Activated CD8-positive, alpha-beta T cell treated with anti-CD3 and anti-CD28 coated beads for 36 hours (primary cell): ENCODE measurements at regions of chr9 and their contacts with region 1.

Region 1: DNA sequence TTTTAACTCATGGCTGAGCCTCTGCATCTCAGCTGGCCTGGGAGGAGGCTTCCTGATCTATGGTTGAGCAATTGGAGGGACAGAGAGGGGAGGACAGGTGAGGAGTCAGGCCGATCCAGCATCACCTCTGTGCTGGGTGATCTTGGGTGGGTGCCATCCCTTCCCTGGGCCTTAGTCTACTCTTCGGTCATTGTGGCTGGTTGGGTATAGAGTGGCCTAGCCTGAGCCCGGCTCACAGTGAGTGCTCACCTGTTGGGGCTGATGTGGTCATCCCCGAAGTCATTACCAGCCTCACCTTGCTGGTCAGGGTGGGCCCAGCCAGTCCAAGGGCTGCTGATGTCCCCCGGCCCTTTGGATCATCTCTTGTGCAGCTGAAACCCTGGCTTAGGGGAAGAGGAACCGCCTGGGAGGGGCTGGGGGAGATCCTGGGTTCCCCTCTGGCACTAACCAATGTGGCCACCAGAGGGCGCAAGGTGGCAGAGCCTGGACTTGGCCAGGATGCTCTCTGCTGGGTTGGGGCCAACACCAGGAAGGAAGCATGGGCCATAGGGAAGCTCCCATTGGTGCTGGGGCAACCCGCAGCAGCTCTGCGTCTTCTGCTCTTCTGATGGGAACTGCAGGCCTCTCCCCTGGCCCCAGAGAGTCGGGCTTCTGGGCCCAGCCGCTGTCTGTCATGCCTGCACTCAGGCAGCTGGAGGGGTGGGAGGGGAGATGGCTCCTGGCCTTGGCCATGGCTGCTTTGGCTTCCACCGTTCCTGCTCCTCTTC is 17.3 kb upstream of the ODF2 start:
- DNase-seq: peak; percentile 89
- ATAC-seq: peak; percentile 99
- H3K4me3 Mint-ChIP-seq: no peak overlapping the region
- H3K27ac Mint-ChIP-seq: no peak overlapping the region
- H3K4me1 Mint-ChIP-seq: no peaks in the 10 kb centered on the region
- H3K27me3 Mint-ChIP-seq: no peaks in the 10 kb centered on the region
- CTCF ChIP-seq: peak; percentile 97

Region 2: DNA sequence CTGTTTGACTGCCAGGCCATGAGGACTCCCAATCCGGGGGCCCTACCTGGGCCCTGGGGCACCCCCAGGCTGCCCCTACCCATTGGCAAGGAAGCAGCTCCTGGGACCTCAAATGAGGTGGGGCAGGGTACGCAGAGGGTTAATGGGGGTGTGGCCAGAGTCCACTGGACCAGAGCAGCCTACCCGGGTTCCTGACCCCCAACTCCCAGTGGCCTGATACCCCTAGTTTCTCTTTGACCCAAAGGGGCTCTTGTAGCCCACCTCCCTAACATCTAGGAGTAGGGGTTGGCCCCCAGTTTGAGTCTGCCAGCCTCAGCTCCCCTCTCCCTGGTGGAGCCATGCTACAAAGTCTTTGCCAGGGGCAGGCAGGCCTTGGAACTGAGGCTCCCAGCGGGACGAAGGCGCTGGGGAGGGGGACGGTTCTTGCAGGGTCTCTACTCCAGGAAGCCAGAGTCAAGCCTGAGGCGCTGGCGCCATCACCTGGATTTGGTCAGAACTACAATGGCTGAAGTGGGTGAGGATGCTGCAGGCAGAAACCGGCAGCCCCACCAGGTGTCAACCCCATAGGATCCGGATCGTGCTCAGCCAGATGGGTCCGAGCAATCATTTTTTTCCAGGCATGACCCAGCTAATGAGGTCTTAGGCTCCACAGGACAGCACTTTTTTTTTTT is 26.3 kb before region 1 on chr9:
- CTCF ChIA-PET with region 1: interaction called, 13 read pairs
- POLR2A ChIA-PET with region 1: interaction called, 3 read pairs
- intact Hi-C with region 1: no loop called
- DNase-seq: peak; percentile 79
- ATAC-seq: peak; percentile 83
- H3K4me3 Mint-ChIP-seq: no peak overlapping the region
- H3K27ac Mint-ChIP-seq: no peak overlapping the region
- H3K4me1 Mint-ChIP-seq: no peaks in the 10 kb centered on the region
- H3K27me3 Mint-ChIP-seq: peaks cover 42% of the 10 kb centered on the region
- CTCF ChIP-seq: peak; percentile 62

Region 3: GRCh38 chr9:128420060-128420650 is 18.4 kb before region 1 on chr9:
- CTCF ChIA-PET with region 1: interaction called, 17 read pairs
- POLR2A ChIA-PET with region 1: no interaction called
- intact Hi-C with region 1: no loop called
- DNase-seq: peak; percentile 78
- ATAC-seq: peak; percentile 83
- H3K4me3 Mint-ChIP-seq: peak overlapping the region; percentile 73
- H3K27ac Mint-ChIP-seq: no peak overlapping the region
- H3K4me1 Mint-ChIP-seq: peaks cover 6% of the 10 kb centered on the region
- H3K27me3 Mint-ChIP-seq: peaks cover 22% of the 10 kb centered on the region
- CTCF ChIP-seq: peak; percentile 85

Region 4: GRCh38 chr9:128448746-128449145 is 10.2 kb after region 1 on chr9:
- CTCF ChIA-PET with region 1: interaction called, 26 read pairs
- POLR2A ChIA-PET with region 1: no interaction called
- intact Hi-C with region 1: no loop called
- DNase-seq: no peak
- ATAC-seq: no peak
- H3K4me3 Mint-ChIP-seq: no peak overlapping the region
- H3K27ac Mint-ChIP-seq: no peak overlapping the region
- H3K4me1 Mint-ChIP-seq: no peaks in the 10 kb centered on the region
- H3K27me3 Mint-ChIP-seq: no peaks in the 10 kb centered on the region
- CTCF ChIP-seq: no peak

Region 5: GRCh38 chr9:128455849-128456612 is 17.5 kb after region 1 on chr9 and contains the start of gene ODF2:
- CTCF ChIA-PET with region 1: interaction called, 16 read pairs
- POLR2A ChIA-PET with region 1: no interaction called
- intact Hi-C with region 1: no loop called
- DNase-seq: peak; percentile 99
- ATAC-seq: peak; percentile 92
- H3K4me3 Mint-ChIP-seq: peak within 1 kb of the TSS; percentile 82
- H3K27ac Mint-ChIP-seq: peak within 1 kb of the TSS; percentile 88
- H3K4me1 Mint-ChIP-seq: peaks cover 16% of the 10 kb centered on the region
- H3K27me3 Mint-ChIP-seq: no peaks in the 10 kb centered on the region
- CTCF ChIP-seq: no peak
- total RNA-seq, gene ODF2: 79.3 to 83.6 TPM

Region 6: GRCh38 chr9:128610897-128611296 is 172.4 kb after region 1 on chr9:
- CTCF ChIA-PET with region 1: interaction called, 13 read pairs
- POLR2A ChIA-PET with region 1: no interaction called
- intact Hi-C with region 1: no loop called
- DNase-seq: no peak
- ATAC-seq: no peak
- H3K4me3 Mint-ChIP-seq: no peak overlapping the region
- H3K27ac Mint-ChIP-seq: no peak overlapping the region
- H3K4me1 Mint-ChIP-seq: no peaks in the 10 kb centered on the region
- H3K27me3 Mint-ChIP-seq: no peaks in the 10 kb centered on the region
- CTCF ChIP-seq: no peak